IMR-90 (cell line): ENCODE measurements at regions of chr13 and their contacts with region 1.

Region 1: DNA sequence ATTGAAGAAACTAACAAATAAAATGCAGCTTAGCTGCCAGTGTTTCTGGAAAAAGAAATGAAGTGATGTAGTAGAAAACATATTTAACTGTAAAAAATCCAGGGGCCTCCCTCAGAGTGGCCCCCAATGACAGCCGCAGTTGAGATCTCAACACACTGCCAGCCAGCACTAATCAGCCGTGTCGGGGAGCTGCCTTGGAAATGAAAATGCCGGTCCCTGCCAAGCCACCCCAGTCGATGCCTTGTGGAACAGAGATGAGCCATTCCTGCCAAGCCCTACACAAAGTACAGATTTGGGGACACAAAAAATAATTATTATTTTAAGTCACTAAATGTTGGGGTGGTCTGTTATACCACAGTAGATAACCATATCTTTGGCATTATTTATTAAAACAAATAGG is 1342.4 kb downstream of the EFNB2 start:
- DNase-seq: no peak
- ATAC-seq: no peak
- H3K4me3 ChIP-seq: no peak overlapping the region
- H3K27ac ChIP-seq: no peak overlapping the region
- H3K4me1 ChIP-seq: no peaks in the 10 kb centered on the region
- H3K27me3 ChIP-seq: no peaks in the 10 kb centered on the region
- CTCF ChIP-seq: no peak
- POLR2A ChIP-seq: no peak
- RAD21 ChIP-seq: no peak

Region 2: DNA sequence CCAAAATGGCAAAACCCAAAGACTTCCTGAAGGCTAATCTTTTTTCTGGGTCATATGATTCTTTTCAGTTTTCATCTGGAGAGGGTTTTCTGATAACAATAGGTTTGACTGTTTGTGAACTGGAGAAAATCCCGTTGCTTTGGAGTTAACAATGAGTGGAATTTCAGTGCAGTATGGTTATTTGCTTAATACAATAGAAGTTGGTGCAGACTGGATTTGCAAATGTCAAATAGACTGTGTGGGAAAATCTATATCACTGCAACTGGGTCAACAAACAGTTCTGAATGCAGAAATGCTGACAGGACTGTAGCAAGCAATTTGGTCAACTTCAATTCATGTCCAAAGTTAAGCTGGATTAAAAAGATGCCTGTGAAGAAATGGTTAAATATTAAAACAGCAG is 1642.5 kb after region 1 on chr13:
- CTCF ChIA-PET with region 1: no interaction called
- POLR2A ChIA-PET with region 1: interaction called, 45 read pairs
- dilution Hi-C with region 1: no loop called
- in situ Hi-C with region 1: no loop called
- intact Hi-C with region 1: no loop called
- DNase-seq: no peak
- ATAC-seq: no peak
- H3K4me3 ChIP-seq: no peak overlapping the region
- H3K27ac ChIP-seq: no peak overlapping the region
- H3K4me1 ChIP-seq: no peaks in the 10 kb centered on the region
- H3K27me3 ChIP-seq: no peaks in the 10 kb centered on the region; the same call in 1 of the 2 replicates
- CTCF ChIP-seq: no peak
- POLR2A ChIP-seq: no peak
- RAD21 ChIP-seq: no peak